Prostate gland (tissue), 2 donors: ENCODE measurements at regions of chr14 and their contacts with region 1.

Region 1: DNA sequence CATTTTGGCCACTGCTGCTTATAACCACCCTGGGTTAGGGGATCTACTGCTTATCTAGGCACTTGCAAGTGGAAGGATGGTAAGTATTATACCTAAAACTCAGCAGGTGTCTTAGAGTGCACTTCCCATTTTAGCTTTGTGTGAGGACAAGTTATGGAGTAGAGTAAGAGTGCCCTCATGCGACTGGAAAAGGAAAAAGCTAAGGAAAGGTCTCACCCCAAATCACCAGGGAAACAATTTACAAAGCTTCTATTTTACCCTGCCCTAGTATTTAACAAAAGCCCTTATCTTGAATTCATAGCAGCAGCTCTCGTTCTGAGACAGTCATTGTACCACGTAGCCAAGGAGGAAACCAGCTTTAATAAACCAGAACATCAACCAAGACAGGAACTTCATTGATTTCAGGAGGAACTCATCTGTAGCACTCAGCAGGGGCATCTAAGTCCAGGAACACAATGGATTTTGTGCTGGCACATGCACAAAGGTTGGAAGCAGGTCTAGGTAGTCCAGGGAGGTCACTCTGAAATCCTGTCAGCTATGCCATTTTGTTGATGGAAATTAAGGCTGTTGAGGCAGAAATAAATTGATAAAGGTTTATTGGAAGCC is 2.9 kb downstream of the RDH12 start:
- DNase-seq: peak; percentile 46
- H3K4me3 ChIP-seq: no peak overlapping the region
- H3K27ac ChIP-seq: peak overlapping the region; percentile 20 to 49
- H3K4me1 ChIP-seq: no peaks in the 10 kb centered on the region
- H3K27me3 ChIP-seq: no peaks in the 10 kb centered on the region
- CTCF ChIP-seq: peak; percentile 17 to 81 (median 62)
- POLR2A ChIP-seq: no peak

Region 2: GRCh38 chr14:67583711-67584644 is 120.6 kb before region 1 on chr14:
- intact Hi-C with region 1: loop called (anchors 10 kb)
- DNase-seq: peak; percentile 46
- H3K4me3 ChIP-seq: no peak overlapping the region
- H3K27ac ChIP-seq: peak overlapping the region in 1 of 2 donors; percentile 24
- H3K4me1 ChIP-seq: no peaks in the 10 kb centered on the region
- H3K27me3 ChIP-seq: no peaks in the 10 kb centered on the region
- CTCF ChIP-seq: peak; percentile 30 to 73 (median 63)
- POLR2A ChIP-seq: no peak

Region 3: DNA sequence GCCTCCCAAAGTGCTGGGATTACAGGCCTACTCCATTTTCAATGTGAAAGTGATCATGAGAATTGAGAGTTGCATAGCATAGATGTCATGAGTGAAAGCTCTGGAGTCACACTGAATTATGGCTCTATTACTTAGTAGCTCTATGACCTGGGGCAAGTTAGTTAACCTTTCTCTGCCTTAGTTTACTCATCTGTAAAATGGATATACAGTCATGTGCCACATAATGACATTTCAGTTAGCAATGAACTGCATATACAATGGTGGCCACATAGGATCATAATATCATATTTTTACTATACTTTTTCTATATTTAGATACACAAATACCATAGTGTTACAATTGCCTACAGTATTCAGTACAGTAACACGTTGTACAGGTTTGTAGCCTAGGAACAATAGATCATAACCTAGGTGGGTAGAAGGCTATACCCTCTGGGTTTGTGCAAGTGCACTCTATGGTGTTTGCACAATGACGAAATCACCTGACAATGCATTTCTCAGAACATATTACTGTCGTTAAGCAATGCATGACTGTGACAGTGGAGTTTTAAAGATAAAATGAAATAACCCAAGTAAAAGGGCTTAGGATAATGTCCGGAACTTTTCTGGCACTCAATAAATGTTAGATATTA is 58.7 kb after region 1 on chr14:
- intact Hi-C with region 1: no loop called
- DNase-seq: no peak
- H3K4me3 ChIP-seq: no peak overlapping the region
- H3K27ac ChIP-seq: no peak overlapping the region
- H3K4me1 ChIP-seq: no peaks in the 10 kb centered on the region
- H3K27me3 ChIP-seq: no peaks in the 10 kb centered on the region
- CTCF ChIP-seq: no peak
- POLR2A ChIP-seq: no peak

Region 4: DNA sequence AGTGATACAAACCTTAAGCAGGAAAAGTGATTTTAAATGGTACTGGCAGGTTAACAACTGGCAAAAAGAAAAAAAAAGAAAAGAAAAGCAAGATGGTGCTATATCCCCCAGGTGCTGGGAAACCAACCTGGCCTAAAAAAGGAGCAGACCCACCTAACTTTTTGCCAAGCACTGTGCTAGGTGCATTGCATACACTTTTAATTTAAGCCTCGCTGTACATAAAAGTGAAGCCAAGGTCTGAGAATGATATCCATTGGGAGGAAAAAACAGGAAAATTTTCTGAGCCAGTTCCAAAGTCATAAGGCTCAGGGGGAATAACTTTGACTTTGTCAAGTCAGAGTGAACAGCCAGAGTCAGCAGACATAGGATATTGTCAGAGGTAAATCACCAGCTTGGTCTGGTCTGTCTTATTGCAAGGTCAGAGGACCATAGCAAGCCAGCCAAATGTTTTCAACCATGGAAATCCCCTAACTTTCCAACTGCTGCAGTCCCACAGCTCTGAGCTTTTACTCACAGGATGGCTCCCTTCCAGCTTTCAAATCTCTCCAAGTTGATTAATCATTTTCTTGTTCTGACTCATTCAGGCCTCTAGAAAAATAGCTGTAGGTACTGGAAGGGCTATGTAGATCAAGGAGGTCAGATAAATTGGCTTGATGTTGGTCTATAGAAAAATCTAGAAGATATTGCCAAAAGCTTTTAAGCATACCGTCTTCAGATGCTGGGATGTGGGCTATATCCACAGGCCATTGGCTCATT is 527.9 kb after region 1 on chr14:
- intact Hi-C with region 1: no loop called
- DNase-seq: peak; percentile 61
- H3K4me3 ChIP-seq: no peak overlapping the region
- H3K27ac ChIP-seq: peak overlapping the region; percentile 36 to 46
- H3K4me1 ChIP-seq: no peaks in the 10 kb centered on the region
- H3K27me3 ChIP-seq: no peaks in the 10 kb centered on the region
- CTCF ChIP-seq: peak in 1 of 4 experiments; percentile 7
- POLR2A ChIP-seq: no peak